ENCODE measurements at regions of chr19 and their contacts with region 1.

Region 1: DNA sequence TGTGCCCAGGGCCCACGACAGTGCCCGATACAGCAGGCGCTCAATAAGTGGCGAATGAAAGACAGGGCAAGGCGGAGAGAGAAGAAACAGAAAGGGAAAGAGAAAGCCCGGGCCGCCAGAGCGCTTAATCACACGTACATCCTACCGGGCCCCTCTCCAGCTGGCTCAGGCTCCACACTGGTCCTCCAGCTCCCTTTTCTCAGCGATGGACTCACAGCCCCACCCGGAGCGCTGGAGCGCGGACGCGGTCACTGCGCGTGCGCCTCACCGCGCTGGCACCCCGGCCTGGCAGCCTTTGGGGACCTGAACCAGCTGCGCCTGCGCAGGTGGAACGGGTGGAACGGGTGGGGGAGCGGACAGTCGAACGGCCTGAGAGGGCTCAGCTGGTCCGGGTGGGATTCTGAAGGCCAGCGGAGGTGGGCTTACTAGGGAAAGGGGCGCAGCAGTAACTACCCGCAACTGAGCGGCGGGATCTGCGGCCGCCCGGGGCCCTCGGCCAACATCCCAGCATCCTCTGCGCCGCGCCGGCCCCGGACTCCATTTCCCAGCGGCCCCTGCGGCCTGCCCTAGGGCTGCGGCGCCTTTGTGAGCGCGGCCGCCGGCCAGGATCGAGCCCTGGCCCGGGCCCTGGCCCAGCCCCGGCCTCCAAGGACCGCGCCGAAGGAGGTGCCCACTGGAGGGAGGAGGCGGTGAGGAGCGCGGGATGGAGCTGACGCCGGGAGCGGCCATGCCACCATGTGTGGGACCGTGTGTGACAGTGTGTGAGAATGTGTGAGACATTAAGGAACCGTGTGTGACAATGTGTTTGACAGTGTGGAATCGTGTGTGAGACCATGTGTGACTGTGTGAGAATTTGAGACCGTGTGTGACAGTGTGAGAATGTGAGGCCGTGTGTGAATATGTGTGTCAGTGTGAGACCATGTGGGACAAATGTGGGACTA is at the start of gene ZNF583:
- DNase-seq: peak; percentile 96 to 98 (median 98)
- ATAC-seq: peak; percentile 95 to 99 (median 98)
- H3K4me3 ChIP-seq: peak within 1 kb of the TSS; percentile 51 to 91 (median 72)
- H3K27ac ChIP-seq: peak within 1 kb of the TSS; percentile 89 to 99 (median 96)
- H3K4me1 ChIP-seq: peaks cover 0 to 19% (median 14%) of the 10 kb centered on the region in 12 donors
- H3K27me3 ChIP-seq: no peaks in the 10 kb centered on the region
- CTCF ChIP-seq: peak in 1 of 12 donors; percentile 8
- POLR2A ChIP-seq: peak in 1 of 2 donors; percentile 60
- total RNA-seq, gene ZNF583: 4.1 to 7.9 (median 5.4) TPM

Region 2: DNA sequence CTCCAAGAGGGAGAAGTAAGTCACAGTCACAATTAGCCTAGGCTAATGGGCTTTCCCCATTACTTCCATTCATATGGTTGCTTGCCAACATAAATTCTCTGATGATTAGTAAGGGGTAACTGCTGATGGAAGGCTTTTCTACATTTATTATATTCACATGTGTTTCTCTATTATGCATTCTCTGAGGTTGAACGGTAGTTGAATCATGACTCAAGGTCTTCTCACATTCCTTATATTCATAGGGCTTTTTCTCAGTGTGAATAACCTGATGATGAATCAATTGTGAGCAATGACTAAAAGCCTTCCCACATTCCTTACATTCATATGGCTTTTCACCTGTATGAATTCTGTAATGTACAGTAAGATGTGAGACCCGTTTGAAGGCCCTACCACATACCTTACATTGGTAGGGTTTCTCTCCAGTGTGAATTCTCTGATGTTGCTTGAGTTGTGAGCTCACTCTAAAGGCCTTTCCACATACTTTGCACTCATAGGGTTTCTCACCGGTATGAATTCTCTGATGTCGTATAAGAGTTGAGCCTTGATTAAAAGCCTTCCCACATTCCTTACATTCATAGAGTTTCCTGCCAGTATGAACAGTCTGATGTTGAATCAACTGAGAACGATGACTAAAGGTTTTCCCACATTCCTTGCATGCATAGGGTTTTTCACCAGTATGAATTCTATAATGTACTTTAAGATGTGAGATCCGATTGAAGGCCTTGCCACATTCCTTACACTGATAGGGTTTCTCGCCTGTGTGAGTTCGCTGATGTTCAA is 20.0 kb before region 1 on chr19:
- intact Hi-C with region 1: no loop called
- DNase-seq: no peak
- ATAC-seq: no peak
- H3K4me3 ChIP-seq: no peak overlapping the region
- H3K27ac ChIP-seq: no peak overlapping the region
- H3K4me1 ChIP-seq: no peaks in the 10 kb centered on the region
- H3K27me3 ChIP-seq: no peaks in the 10 kb centered on the region
- CTCF ChIP-seq: no peak
- POLR2A ChIP-seq: no peak

Region 3: GRCh38 chr19:56477429-56478338 is 73.7 kb after region 1 on chr19:
- intact Hi-C with region 1: loop called in 5 of 10 experiments (anchors 5 to 10 kb)
- DNase-seq: peak; percentile 93 to 97 (median 94)
- ATAC-seq: peak; percentile 96 to 98 (median 96)
- H3K4me3 ChIP-seq: peak overlapping the region; percentile 58 to 95 (median 80)
- H3K27ac ChIP-seq: peak overlapping the region; percentile 4 to 93 (median 84)
- H3K4me1 ChIP-seq: peaks cover 0 to 29% (median 14%) of the 10 kb centered on the region in 12 donors
- H3K27me3 ChIP-seq: no peaks in the 10 kb centered on the region
- CTCF ChIP-seq: no peak
- POLR2A ChIP-seq: peak in 1 of 2 donors; percentile 77

Region 4: DNA sequence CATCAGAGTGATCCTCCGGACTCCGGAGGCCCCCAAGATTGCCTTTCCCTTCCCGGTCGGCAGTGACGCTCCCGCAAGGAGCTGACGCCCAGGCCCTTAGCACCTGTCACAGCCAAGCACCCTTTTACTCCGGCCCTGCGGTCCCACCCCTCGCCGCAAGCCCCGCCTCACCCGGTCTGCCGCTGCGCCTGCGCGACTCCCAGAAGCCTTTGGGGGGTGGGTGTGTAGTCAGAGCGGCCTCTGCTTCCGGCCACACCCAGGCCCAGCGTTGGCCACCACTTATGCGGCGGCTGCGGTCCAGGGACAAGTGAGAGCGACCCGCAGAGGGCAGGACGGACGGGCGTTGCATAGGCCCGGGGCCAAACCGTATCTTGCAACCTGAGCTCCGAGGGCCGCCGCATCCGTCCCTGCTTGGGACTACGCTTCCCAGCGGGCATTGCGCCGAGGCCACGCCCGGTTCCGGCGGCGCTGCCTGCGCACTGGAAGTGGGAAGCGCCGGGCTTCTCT is 134.3 kb after region 1 on chr19:
- intact Hi-C with region 1: loop called in 2 of 10 experiments (anchors 1 to 10 kb)
- DNase-seq: peak; percentile 93 to 96 (median 94)
- ATAC-seq: peak; percentile 98 to 99 (median 98)
- H3K4me3 ChIP-seq: peak overlapping the region; percentile 52 to 94 (median 82)
- H3K27ac ChIP-seq: peak overlapping the region; percentile 88 to 98 (median 96)
- H3K4me1 ChIP-seq: peaks cover 0 to 20% (median 10%) of the 10 kb centered on the region in 12 donors
- H3K27me3 ChIP-seq: no peaks in the 10 kb centered on the region
- CTCF ChIP-seq: no peak
- POLR2A ChIP-seq: peak in 1 of 2 donors; percentile 49

Region 5: DNA sequence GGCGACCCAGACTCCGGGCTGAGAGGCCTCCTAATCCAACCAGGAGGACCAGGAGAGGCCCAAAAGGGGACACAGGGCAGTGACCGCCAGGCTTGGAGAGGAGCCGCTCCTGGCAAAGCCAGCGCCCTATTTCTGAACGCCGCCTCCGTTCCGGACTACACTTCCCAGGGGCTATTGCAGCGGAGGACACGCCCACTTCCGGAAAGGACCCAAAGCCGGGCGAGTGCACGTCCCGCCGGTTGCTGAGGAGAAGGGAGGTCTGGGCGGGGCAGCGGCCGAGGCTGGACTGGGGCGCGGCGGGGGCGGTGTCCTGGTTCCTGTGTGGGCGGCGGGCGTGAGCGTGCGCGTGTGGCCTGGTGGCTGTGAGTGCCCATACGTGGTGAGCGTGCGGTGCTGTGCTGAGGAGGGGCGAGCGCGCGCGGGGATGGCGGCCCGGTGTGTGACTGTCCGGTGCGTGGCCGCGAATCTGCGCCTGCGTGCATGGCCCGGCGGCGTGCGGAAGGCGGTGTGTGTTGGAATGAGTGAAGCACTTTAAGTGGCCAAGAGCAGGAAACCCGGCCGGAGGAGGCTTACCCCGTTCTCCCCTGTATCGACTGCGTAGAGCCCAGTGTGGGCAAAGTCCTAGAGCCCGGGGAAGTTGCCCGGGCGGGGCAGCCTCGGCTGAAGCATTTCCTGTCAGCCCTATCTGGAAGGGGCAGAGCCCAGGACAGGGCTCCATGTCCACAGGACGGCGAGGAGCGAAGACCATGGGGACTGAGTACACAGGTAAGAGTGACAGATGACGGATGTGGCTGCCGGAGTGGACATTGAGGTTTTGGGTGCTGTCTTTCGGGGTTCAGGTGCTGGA is 163.5 kb after region 1 on chr19 and contains the start of gene ZNF470:
- intact Hi-C with region 1: loop called in 2 of 10 experiments (anchors 1 to 10 kb)
- DNase-seq: peak; percentile 95 to 98 (median 96)
- ATAC-seq: peak; percentile 98 to 100 (median 99)
- H3K4me3 ChIP-seq: peak within 1 kb of the TSS; percentile 75 to 98 (median 87)
- H3K27ac ChIP-seq: peak within 1 kb of the TSS; percentile 74 to 97 (median 90)
- H3K4me1 ChIP-seq: peaks cover 0 to 15% (median 6%) of the 10 kb centered on the region in 12 donors
- H3K27me3 ChIP-seq: no peaks in the 10 kb centered on the region
- CTCF ChIP-seq: peak in 1 of 12 donors; percentile 15
- POLR2A ChIP-seq: peak in 1 of 2 donors; percentile 63
- total RNA-seq, gene ZNF470: 1.7 to 7.1 (median 3.2) TPM

Measured in heart left ventricle (tissue), 16 donors.